Gastrocnemius medialis (tissue), 4 donors: ENCODE measurements at regions of chr6 and their contacts with region 1.

Region 1: DNA sequence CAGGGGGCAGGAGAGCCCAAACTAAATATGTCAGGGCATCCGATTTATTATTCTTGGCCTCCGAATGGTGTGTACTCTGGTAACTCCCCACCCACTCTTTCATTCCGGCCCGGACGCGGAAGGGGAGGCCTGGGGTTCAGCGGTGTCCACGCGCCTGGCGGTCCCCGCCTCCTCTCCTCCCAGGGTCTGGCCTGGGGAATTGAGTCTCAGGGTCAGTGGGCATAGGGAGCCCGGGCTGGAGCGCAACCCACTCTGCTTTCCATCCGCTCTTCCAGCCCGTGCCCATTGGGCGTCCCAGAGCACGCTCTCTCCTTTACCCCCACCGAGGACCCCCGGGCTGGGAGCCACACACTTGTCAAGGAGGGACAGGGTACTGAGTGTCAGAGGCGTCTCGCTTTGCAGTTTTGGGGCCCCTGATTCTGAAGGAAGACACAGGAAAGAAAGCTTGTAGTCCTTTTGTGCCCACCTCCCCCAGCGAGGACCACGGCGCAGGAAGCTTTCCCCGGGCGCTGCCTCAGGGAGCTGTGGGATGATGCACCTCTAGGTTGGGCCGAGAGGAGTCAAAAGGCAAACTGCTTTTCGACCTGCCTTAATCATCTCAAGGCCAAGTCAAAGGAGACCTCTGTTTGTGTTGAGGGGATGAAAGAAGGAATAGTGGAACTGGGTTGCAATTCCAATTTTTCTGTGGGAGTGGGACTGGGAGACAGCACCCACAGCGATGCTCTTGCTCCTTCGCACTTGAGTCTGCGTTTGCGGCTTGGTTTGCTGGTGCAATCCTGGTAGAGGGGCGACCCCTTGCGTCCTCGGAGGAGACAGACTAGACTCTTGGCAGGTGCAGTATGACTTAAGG is 2.5 kb downstream of the RSPO3 start:
- DNase-seq: peak; percentile 73 to 79
- ATAC-seq: peak; percentile 62 to 85
- H3K4me3 ChIP-seq: peak overlapping the region; percentile 66 to 72 (median 68)
- H3K27ac ChIP-seq: peak overlapping the region; percentile 83 to 94 (median 86)
- H3K4me1 ChIP-seq: peaks cover 41 to 42% of the 10 kb centered on the region in 2 donors
- H3K27me3 ChIP-seq: peaks cover 0 to 9% (median 0%) of the 10 kb centered on the region in 3 donors
- CTCF ChIP-seq: peak; percentile 57 to 85 (median 72)
- POLR2A ChIP-seq: no peak

Region 2: GRCh38 chr6:126033696-126034095 is 1087.3 kb before region 1 on chr6:
- in situ Hi-C with region 1: no loop called
- intact Hi-C with region 1: loop called (anchors 5 kb)
- DNase-seq: no peak
- ATAC-seq: peak; percentile 58 to 78
- H3K4me3 ChIP-seq: no peak overlapping the region
- H3K27ac ChIP-seq: no peak overlapping the region
- H3K4me1 ChIP-seq: peaks cover 13 to 14% of the 10 kb centered on the region in 2 donors
- H3K27me3 ChIP-seq: no peaks in the 10 kb centered on the region
- CTCF ChIP-seq: peak in 3 of 5 experiments; percentile 21 to 39 (median 37)
- POLR2A ChIP-seq: no peak

Region 3: GRCh38 chr6:126643352-126643751 is 477.7 kb before region 1 on chr6:
- in situ Hi-C with region 1: no loop called
- intact Hi-C with region 1: no loop called
- DNase-seq: no peak
- ATAC-seq: no peak
- H3K4me3 ChIP-seq: no peak overlapping the region
- H3K27ac ChIP-seq: no peak overlapping the region
- H3K4me1 ChIP-seq: no peaks in the 10 kb centered on the region
- H3K27me3 ChIP-seq: no peaks in the 10 kb centered on the region
- CTCF ChIP-seq: no peak
- POLR2A ChIP-seq: no peak

Region 4: GRCh38 chr6:126718600-126719327 is 402.2 kb before region 1 on chr6:
- in situ Hi-C with region 1: no loop called
- intact Hi-C with region 1: loop called (anchors 5 kb)
- DNase-seq: no peak
- ATAC-seq: no peak
- H3K4me3 ChIP-seq: no peak overlapping the region
- H3K27ac ChIP-seq: peak overlapping the region in 3 of 4 donors; percentile 4 to 79 (median 79)
- H3K4me1 ChIP-seq: peaks cover 19 to 21% of the 10 kb centered on the region in 2 donors
- H3K27me3 ChIP-seq: no peaks in the 10 kb centered on the region
- CTCF ChIP-seq: no peak
- POLR2A ChIP-seq: no peak

Region 5: GRCh38 chr6:127186889-127187288 is 65.9 kb after region 1 on chr6:
- in situ Hi-C with region 1: no loop called
- intact Hi-C with region 1: loop called (anchors 2 kb)
- DNase-seq: peak; percentile 6 to 58
- ATAC-seq: no peak
- H3K4me3 ChIP-seq: no peak overlapping the region
- H3K27ac ChIP-seq: peak overlapping the region in 2 of 4 donors; percentile 74 to 78
- H3K4me1 ChIP-seq: peaks cover 26 to 29% of the 10 kb centered on the region in 2 donors
- H3K27me3 ChIP-seq: no peaks in the 10 kb centered on the region
- CTCF ChIP-seq: peak; percentile 15 to 45 (median 22)
- POLR2A ChIP-seq: no peak